Vagina (tissue), 2 donors: ENCODE measurements at regions of chr9 and their contacts with region 1.

Region 1: DNA sequence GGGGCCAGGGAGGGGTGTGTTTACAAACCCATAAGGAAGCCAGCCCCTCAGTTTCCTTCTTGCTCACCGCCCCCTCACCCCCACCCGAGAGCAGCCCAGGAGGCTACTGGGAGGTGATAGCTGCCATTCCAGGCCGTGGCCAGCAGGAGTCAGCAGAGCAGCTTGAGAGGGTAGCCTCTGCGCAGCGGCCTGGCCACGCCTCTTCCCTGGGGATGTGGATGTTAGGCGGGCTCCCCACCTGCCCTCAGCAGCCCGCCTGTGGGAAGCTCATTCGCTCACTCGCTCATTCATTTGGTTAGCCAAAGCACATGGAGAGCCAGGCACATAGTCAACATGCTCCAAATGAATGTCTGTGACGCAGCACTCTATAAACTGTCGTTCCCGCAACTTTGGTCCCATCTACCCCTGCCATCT is 6.1 kb upstream of the DPM2 start:
- DNase-seq: no peak
- H3K4me3 ChIP-seq: no peak overlapping the region
- H3K27ac ChIP-seq: peak overlapping the region; percentile 77
- H3K4me1 ChIP-seq: peaks cover 46% of the 10 kb centered on the region
- H3K27me3 ChIP-seq: no peaks in the 10 kb centered on the region
- CTCF ChIP-seq: peak; percentile 84 to 96 (median 90)
- POLR2A ChIP-seq: no peak

Region 2: DNA sequence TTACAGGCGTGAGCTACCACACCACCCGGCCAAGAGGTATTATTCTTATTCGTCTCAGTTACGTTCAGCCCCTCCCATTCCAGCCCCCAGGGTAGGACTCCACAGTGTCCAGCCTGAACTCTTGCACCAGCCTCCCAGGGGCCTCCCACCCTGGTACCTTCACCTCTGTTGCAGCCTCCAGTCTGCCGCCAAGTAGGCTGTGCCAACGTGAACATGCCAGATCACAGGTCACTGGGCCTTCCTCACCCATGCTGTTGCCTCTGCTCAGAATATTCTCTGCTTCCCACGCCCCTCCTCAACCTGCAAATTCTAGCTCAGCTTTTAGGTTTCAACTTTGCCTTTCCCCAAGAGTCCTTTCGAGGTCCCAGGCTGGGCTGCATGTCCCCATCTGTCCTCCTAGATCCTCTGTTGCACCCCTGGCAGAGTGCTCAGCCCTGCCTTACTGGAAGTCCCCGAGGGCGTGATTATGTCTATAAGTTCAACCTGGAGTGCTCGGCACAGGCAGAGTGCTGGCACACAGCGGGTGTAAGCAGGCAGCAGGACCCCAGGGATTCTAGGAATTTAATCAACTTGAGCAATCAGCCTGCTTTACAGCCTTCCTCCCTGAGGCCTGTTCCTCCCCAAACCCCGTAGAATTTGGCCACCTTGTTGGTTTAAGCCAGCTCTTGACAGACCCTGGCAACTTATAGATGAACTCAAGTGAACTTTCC is 344.7 kb before region 1 on chr9:
- intact Hi-C with region 1: no loop called
- DNase-seq: no peak
- H3K4me3 ChIP-seq: no peak overlapping the region
- H3K27ac ChIP-seq: no peak overlapping the region
- H3K4me1 ChIP-seq: no peaks in the 10 kb centered on the region
- H3K27me3 ChIP-seq: no peaks in the 10 kb centered on the region
- CTCF ChIP-seq: no peak
- POLR2A ChIP-seq: no peak

Region 3: GRCh38 chr9:127980706-127981558 is 37.2 kb after region 1 on chr9 and contains the start of gene EEIG1:
- intact Hi-C with region 1: loop called (anchors 5 kb)
- DNase-seq: no peak
- H3K4me3 ChIP-seq: peak within 1 kb of the TSS; percentile 78 to 95
- H3K27ac ChIP-seq: peak within 1 kb of the TSS; percentile 96
- H3K4me1 ChIP-seq: peaks cover 51% of the 10 kb centered on the region
- H3K27me3 ChIP-seq: no peaks in the 10 kb centered on the region
- CTCF ChIP-seq: no peak
- POLR2A ChIP-seq: peak in 1 of 2 donors; percentile 87
- total RNA-seq, gene EEIG1: 30.9 TPM

Region 4: DNA sequence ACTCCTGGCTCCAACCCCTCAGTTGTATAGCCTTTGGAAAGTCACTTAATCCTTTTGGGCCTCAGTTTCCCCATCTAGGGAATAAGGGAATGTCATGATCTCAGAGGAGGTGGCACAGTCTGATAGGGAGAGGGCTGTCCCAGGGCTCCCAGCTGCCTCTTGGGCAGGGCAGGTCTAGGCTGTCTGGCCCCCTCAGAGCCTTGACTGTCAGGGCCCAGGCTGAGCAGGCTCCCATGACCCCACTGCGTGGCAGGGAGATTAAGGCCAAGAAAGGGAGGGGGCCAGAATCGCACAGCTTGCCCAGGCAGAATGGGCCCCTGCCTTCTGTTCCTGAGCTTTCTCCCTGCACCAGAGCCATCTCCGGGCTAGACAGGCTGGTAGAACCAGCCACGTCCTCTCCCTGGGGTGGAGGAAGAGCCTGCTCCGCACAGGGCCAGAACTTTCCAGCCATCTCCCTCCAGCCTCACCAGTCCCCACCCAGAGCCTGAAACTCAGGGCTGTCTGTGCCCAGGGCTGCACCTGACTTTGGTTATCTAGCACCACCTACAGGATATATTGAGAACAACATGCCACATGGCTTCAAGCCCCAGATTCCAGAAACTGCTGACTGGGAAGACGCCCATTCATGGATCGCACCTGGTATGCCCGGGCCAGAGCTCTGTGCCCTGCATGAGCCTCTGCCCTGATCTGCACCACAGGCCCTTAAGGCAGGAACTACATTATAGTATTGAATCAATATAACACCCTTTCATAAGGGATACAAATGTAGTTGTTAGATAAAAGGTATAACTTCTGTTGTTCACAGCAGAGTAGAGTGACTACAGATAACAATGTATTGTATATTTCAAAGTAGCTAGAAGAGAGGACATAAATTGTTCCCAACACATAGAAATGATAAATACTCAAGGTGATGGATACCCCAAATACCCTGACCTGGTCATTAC is 91.4 kb after region 1 on chr9:
- intact Hi-C with region 1: loop called (anchors 5 kb)
- DNase-seq: no peak
- H3K4me3 ChIP-seq: no peak overlapping the region
- H3K27ac ChIP-seq: peak overlapping the region; percentile 54
- H3K4me1 ChIP-seq: peaks cover 6% of the 10 kb centered on the region
- H3K27me3 ChIP-seq: no peaks in the 10 kb centered on the region
- CTCF ChIP-seq: peak; percentile 87 to 97 (median 93)
- POLR2A ChIP-seq: no peak

Region 5: GRCh38 chr9:128117613-128118471 is 174.1 kb after region 1 on chr9:
- intact Hi-C with region 1: loop called (anchors 5 kb)
- DNase-seq: no peak
- H3K4me3 ChIP-seq: no peak overlapping the region
- H3K27ac ChIP-seq: peak overlapping the region; percentile 51
- H3K4me1 ChIP-seq: peaks cover 4% of the 10 kb centered on the region
- H3K27me3 ChIP-seq: no peaks in the 10 kb centered on the region
- CTCF ChIP-seq: peak; percentile 98 to 100 (median 100)
- POLR2A ChIP-seq: no peak